CD8-positive, alpha-beta T cell (primary cell): ENCODE measurements at regions of chr16 and their contacts with region 1.

Region 1: GRCh38 chr16:70162041-70162451 is 11.5 kb upstream of the CLEC18C start:
- DNase-seq: no peak
- ATAC-seq: no peak
- H3K4me3 ChIP-seq: no peak overlapping the region
- H3K4me3 Mint-ChIP-seq: no peak overlapping the region
- H3K27ac ChIP-seq: no peak overlapping the region
- H3K27ac Mint-ChIP-seq: peak overlapping the region; percentile 24
- H3K4me1 ChIP-seq: no peaks in the 10 kb centered on the region
- H3K4me1 Mint-ChIP-seq: peaks cover 4% of the 10 kb centered on the region
- H3K27me3 ChIP-seq: no peaks in the 10 kb centered on the region
- H3K27me3 Mint-ChIP-seq: no peaks in the 10 kb centered on the region
- CTCF ChIP-seq: no peak

Region 2: GRCh38 chr16:70151391-70151790 is 10.7 kb before region 1 on chr16:
- CTCF ChIA-PET with region 1: interaction called, 11 read pairs
- POLR2A ChIA-PET with region 1: no interaction called
- intact Hi-C with region 1: no loop called
- DNase-seq: no peak
- ATAC-seq: no peak
- H3K4me3 ChIP-seq: no peak overlapping the region
- H3K4me3 Mint-ChIP-seq: no peak overlapping the region
- H3K27ac ChIP-seq: no peak overlapping the region
- H3K27ac Mint-ChIP-seq: peak overlapping the region; percentile 13
- H3K4me1 ChIP-seq: no peaks in the 10 kb centered on the region
- H3K4me1 Mint-ChIP-seq: no peaks in the 10 kb centered on the region
- H3K27me3 ChIP-seq: no peaks in the 10 kb centered on the region
- H3K27me3 Mint-ChIP-seq: no peaks in the 10 kb centered on the region
- CTCF ChIP-seq: no peak